Left ventricle myocardium inferior (tissue), 1 donor: ENCODE measurements at regions of chr20 and their contacts with region 1.

Region 1: DNA sequence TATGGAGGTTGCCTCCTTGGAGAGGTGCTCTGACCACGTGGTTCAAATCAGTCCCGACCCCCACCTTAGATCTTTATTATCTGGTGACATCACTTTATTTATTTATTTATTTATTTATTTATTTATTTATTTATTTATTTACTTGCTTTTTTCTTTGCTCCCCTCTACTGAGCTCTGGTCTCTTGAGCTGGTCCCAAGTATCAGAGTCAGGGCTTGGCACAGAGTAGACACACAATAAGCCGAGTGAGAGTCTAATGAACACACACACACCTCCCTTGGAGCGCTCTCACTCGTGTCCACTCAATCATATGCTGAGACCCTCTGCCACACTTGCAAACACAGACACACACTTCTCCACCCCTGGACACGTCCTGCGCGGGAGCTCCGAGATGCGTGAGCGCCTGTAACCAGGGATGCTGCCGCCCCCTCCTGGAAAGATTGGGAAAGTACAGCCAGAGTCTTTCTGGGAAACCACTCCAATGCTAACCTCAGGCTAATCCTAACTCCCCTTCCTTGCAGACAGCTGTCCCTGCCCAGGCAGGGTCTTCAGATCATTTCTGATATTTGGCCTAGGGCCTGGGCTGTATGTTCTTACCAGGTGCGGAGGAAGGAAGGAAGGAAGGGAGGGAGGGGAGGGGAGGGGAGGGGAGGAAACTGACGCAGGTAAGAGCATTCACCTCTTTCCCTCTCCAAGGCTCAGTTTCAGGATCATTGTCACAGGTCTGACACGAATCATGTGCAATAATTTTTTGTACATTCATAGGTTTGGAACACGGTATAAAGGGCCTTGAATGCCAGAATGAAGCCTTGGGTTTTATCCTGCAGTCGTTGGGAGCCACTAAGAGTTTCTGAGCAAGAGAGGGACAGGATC is 70.9 kb downstream of the STK35 start:
- DNase-seq: peak; percentile 65
- H3K4me3 ChIP-seq: peak overlapping the region; percentile 14
- H3K27ac ChIP-seq: no peak overlapping the region
- H3K4me1 ChIP-seq: peaks cover 16% of the 10 kb centered on the region
- H3K27me3 ChIP-seq: no peaks in the 10 kb centered on the region
- CTCF ChIP-seq: peak; percentile 90

Region 2: GRCh38 chr20:1965520-1966351 is 206.8 kb before region 1 on chr20:
- intact Hi-C with region 1: loop called (anchors 5 kb)
- DNase-seq: peak; percentile 73
- H3K4me3 ChIP-seq: peak overlapping the region; percentile 25
- H3K27ac ChIP-seq: no peak overlapping the region
- H3K4me1 ChIP-seq: peaks cover 12% of the 10 kb centered on the region
- H3K27me3 ChIP-seq: peaks cover 80% of the 10 kb centered on the region
- CTCF ChIP-seq: peak; percentile 94

Region 3: DNA sequence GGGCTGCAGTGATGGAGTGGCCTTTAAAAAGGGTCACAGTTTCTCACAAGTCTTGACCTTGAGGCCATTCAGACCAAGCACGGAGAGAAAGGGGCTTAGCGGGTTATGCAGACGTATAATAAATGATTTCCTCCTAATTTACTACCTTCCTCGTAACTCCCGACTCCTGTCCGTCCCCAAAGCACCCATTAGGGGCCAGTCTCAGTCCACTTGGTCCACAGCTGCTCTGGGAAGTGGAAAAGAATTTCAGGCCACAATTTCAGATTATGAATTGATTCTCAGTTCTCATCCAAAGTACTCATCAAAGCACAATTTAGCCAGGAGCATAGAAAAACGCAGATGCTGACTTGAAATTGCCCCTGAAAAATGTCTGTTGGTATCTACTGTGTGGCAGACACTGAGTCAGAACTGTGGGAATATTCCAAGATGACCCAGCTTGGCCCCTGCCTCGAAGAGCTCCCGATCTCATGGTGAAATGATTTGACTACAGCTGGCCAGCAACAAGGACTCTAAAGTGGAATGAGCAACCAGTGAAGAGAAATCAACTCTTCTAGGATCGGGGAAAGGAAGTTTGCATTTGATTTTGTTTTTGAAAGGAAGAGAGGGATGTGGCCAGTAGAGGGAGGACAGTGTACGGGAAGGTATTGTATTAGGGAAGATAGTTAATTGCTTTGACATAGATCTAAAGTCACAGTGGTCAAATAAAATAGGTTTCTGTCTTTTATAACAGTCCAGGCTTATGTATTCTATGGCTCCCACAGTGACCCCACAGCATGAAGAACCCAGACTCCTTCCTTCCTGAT is 86.2 kb before region 1 on chr20:
- intact Hi-C with region 1: loop called (anchors 5 kb)
- DNase-seq: no peak
- H3K4me3 ChIP-seq: no peak overlapping the region
- H3K27ac ChIP-seq: no peak overlapping the region
- H3K4me1 ChIP-seq: peaks cover 7% of the 10 kb centered on the region
- H3K27me3 ChIP-seq: peaks cover 57% of the 10 kb centered on the region
- CTCF ChIP-seq: peak; percentile 48